Motor neuron (in vitro differentiated cells): ENCODE measurements at regions of chr22 and their contacts with region 1.

Region 1: DNA sequence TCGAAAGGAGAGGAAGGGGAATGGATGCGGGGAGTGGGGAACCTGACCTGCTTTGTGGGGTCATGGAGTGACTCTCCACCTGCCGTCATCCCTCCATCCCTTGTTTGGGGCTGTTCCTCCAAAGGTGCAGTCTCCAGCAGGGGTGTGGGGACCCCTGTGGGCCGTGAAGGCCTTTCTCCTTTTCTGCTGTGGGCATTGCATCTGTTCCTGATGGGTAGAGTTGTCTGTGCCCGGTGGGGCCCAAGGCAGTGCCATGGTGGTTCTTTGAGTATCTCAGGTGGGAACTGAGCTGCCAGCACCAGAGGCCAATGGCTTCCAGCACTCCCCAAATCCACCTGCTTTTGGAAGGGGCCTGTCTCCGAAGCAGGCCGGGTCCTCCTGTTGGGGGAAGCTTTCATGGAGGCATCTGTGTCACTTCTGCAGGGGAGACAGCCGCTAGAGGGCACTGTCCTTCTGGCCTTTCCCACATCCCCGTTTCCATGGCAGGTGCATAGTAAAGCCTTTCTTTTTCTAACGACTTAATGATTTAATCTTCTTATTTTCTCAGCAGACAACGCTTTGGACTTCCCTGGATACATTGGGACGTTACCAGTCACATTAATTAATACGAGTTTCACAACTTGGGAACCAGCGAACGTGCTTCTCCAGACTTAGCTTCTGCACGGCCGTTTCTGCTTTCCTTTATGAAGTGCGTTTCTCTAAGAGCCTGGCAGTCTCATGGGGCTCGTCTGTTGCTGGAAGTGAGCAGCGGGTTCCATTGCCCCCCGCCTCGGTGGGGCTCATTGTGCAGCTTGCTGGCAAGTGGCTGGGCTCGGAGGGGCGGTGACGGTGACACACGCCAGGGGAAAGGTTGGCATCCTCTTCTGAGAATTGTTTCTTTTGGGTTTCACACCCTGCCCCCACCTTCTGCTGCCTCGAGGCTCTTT is 57.1 kb downstream of the PARVB start:
- ATAC-seq: peak; percentile 20 to 84 (median 80)
- H3K4me3 ChIP-seq: peak overlapping the region in 2 of 5 donors; percentile 5 to 26
- H3K27ac ChIP-seq: no peak overlapping the region
- H3K4me1 ChIP-seq: peaks cover 18 to 21% of the 10 kb centered on the region in 2 donors

Region 2: GRCh38 chr22:43993027-43993760 is 88.0 kb before region 1 on chr22:
- in situ Hi-C with region 1: loop called in 1 of 9 experiments (anchors 10 kb)
- ATAC-seq: peak; percentile 46 to 91 (median 82)
- H3K4me3 ChIP-seq: no peak overlapping the region
- H3K27ac ChIP-seq: no peak overlapping the region
- H3K4me1 ChIP-seq: peaks cover 11% of the 10 kb centered on the region in 2 donors

Region 3: DNA sequence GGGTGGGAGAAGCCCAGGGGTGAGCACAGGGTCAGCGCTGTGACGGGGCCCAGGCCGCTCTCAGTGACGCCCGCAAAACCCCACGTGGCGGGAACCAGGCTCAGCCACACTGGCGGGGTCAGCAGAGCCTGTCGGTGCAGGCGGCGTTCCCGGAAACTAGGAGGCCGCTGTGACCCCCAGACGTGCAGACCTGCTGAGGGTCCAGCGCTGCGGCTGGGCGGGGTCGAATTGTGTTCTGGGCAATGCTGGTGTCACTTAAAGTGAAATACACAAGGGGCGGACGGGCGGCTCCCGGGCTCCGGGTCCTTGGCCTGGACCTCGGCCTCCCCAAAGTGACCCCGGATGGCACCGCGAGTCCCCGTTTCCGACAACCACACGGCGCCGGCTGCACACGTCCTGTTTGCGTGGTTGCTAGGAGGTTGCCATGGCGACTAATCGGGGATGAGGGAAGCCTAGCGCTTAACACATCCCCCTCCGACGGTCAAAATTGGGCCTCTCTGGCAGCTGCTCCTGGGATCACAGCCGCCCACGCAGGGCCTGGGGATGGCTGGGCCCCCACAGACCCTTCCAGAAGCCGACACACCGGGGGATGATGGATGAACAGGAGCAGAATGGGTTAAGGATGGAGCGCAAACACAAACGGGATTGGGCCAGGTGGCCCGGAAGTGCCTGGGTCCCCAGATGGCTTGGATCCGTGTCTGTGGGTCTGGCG is 539.1 kb after region 1 on chr22:
- in situ Hi-C with region 1: loop called in 3 of 9 experiments (anchors 25 kb)
- ATAC-seq: peak; percentile 53 to 73 (median 70)
- H3K4me3 ChIP-seq: no peak overlapping the region
- H3K27ac ChIP-seq: peak overlapping the region; percentile 40 to 63
- H3K4me1 ChIP-seq: peaks cover 33 to 46% of the 10 kb centered on the region in 2 donors